ENCODE measurements at regions of chr19 and their contacts with region 1.

Region 1: GRCh38 chr19:51016798-51017683 is 2.5 kb downstream of the KLK10 start:
- DNase-seq: peak; percentile 40
- H3K4me3 Mint-ChIP-seq: no peak overlapping the region
- H3K27ac Mint-ChIP-seq: no peak overlapping the region
- H3K4me1 Mint-ChIP-seq: peaks cover 13% of the 10 kb centered on the region
- H3K27me3 Mint-ChIP-seq: peaks cover 59% of the 10 kb centered on the region

Region 2: DNA sequence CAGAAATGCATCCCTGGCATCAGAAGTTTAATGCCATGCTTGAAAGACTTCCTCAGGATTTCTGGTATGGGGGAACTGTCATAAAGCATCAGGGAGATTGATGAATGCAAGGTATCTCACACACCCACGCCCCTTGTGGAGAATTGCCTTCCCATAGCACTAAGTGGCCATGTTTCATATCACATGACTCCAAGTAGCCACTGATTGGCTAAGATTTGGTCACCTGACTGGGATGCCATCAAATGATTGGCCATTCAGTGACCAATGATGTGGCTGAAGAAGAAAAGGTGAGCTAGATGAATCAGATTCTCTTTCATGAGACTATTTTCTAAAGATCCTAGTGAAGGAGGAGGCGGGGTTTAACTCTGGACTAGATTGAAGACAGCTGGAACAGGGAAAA is 22.9 kb before region 1 on chr19:
- CTCF ChIA-PET with region 1: no interaction called
- POLR2A ChIA-PET with region 1: no interaction called
- intact Hi-C with region 1: no loop called
- DNase-seq: no peak
- H3K4me3 Mint-ChIP-seq: no peak overlapping the region
- H3K27ac Mint-ChIP-seq: no peak overlapping the region
- H3K4me1 Mint-ChIP-seq: no peaks in the 10 kb centered on the region
- H3K27me3 Mint-ChIP-seq: peaks cover 19% of the 10 kb centered on the region

Region 3: GRCh38 chr19:51097166-51097738 is 80.2 kb after region 1 on chr19:
- CTCF ChIA-PET with region 1: interaction called, 12 read pairs
- POLR2A ChIA-PET with region 1: no interaction called
- intact Hi-C with region 1: loop called (anchors 5 kb)
- DNase-seq: peak; percentile 80
- H3K4me3 Mint-ChIP-seq: no peak overlapping the region
- H3K27ac Mint-ChIP-seq: no peak overlapping the region
- H3K4me1 Mint-ChIP-seq: peaks cover 11% of the 10 kb centered on the region
- H3K27me3 Mint-ChIP-seq: no peaks in the 10 kb centered on the region

Region 4: GRCh38 chr19:51127755-51128154 is 110.7 kb after region 1 on chr19:
- CTCF ChIA-PET with region 1: no interaction called
- POLR2A ChIA-PET with region 1: no interaction called
- intact Hi-C with region 1: no loop called
- DNase-seq: no peak
- H3K4me3 Mint-ChIP-seq: no peak overlapping the region
- H3K27ac Mint-ChIP-seq: no peak overlapping the region
- H3K4me1 Mint-ChIP-seq: peaks cover 74% of the 10 kb centered on the region
- H3K27me3 Mint-ChIP-seq: no peaks in the 10 kb centered on the region

Measured in activated CD4-positive, alpha-beta memory T cell treated with anti-CD3 and anti-CD28 coated beads for 36 hours (primary cell).